GM12878 (cell line): ENCODE measurements at regions of chr6 and their contacts with region 1.

Region 1: GRCh38 chr6:139364302-139364981 is 10.0 kb downstream of the CITED2 start:
- DNase-seq: peak; percentile 48
- ATAC-seq: peak; percentile 79
- H3K4me3 ChIP-seq: no peak overlapping the region
- H3K27ac ChIP-seq: no peak overlapping the region
- H3K4me1 ChIP-seq: no peaks in the 10 kb centered on the region
- H3K27me3 ChIP-seq: no peaks in the 10 kb centered on the region
- CTCF ChIP-seq: peak; percentile 42 to 71 (median 48); a peak in 5 of 6 replicates
- EP300 ChIP-seq: no peak
- POLR2A ChIP-seq: no peak
- RAD21 ChIP-seq: peak; percentile 92

Region 2: GRCh38 chr6:137811121-137811915 is 1553.1 kb before region 1 on chr6:
- CTCF ChIA-PET with region 1: no interaction called
- POLR2A ChIA-PET with region 1: no interaction called
- RAD21 ChIA-PET with region 1: no interaction called
- SMC1A ChIA-PET with region 1: no interaction called
- in situ Hi-C with region 1: no loop called
- intact Hi-C with region 1: no loop called
- DNase-seq: peak; percentile 95
- ATAC-seq: peak; percentile 95
- H3K4me3 ChIP-seq: peak overlapping the region; percentile 20
- H3K27ac ChIP-seq: peak overlapping the region; percentile 89
- H3K4me1 ChIP-seq: peaks cover 31% of the 10 kb centered on the region
- H3K27me3 ChIP-seq: no peaks in the 10 kb centered on the region
- CTCF ChIP-seq: no peak
- EP300 ChIP-seq: peak in 1 of 2 experiments; percentile 72; a peak in 2 of 4 replicates
- POLR2A ChIP-seq: peak; percentile 88
- RAD21 ChIP-seq: no peak

Region 3: GRCh38 chr6:138297761-138298298 is 1066.6 kb before region 1 on chr6:
- CTCF ChIA-PET with region 1: no interaction called
- POLR2A ChIA-PET with region 1: no interaction called
- RAD21 ChIA-PET with region 1: no interaction called
- SMC1A ChIA-PET with region 1: no interaction called
- in situ Hi-C with region 1: no loop called
- intact Hi-C with region 1: no loop called
- DNase-seq: no peak
- ATAC-seq: no peak
- H3K4me3 ChIP-seq: no peak overlapping the region
- H3K27ac ChIP-seq: no peak overlapping the region
- H3K4me1 ChIP-seq: no peaks in the 10 kb centered on the region
- H3K27me3 ChIP-seq: no peaks in the 10 kb centered on the region
- CTCF ChIP-seq: no peak
- EP300 ChIP-seq: no peak
- POLR2A ChIP-seq: no peak
- RAD21 ChIP-seq: no peak

Region 4: DNA sequence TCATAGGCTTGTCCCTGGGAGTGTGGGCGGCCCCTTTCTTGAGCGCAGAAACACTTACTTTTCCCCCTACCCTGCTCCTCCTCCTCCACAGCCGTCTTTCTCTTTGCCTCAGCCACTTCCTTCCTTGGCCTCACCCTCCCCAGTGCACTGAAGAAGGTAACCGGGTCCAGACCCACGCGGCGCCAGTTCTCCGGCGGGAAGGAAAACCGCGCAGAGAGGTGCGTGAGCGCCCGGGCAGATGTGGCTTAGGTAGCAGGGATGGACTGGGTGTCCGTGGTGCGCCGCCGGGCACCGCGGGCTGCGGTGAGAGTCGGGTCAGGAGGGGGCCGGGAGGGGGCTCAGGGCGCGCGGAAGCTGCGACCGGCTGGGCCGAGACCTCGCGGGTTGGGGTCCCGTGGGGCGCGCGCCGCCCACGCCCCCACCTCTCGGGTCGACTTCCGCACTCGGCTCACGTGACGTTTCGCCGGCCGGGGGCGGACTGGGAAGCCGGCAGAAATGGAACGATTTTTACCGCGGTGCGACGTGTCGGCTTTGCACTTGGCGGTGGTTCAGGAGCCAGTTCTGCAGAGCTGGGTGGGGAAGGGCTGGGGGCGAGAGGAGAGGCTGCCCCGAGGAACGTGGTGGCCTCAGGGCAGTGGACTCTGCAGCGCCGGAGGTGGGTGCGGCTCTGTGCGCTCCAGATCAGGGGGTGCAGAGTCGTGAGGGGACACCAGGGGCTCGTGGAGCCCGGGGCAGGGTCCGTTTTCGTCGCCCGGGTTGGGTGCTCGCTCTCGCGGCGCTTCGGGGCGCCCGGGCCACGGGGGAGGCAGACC is 335.6 kb before region 1 on chr6 and contains the start of gene ABRACL:
- CTCF ChIA-PET with region 1: interaction called, 3 read pairs
- POLR2A ChIA-PET with region 1: no interaction called
- RAD21 ChIA-PET with region 1: no interaction called
- SMC1A ChIA-PET with region 1: no interaction called
- in situ Hi-C with region 1: no loop called
- intact Hi-C with region 1: loop called (anchors 10 kb)
- DNase-seq: peak; percentile 45
- ATAC-seq: peak; percentile 80
- H3K4me3 ChIP-seq: peak within 1 kb of the TSS; percentile 93
- H3K27ac ChIP-seq: peak within 1 kb of the TSS; percentile 88
- H3K4me1 ChIP-seq: peaks cover 6% of the 10 kb centered on the region
- H3K27me3 ChIP-seq: no peaks in the 10 kb centered on the region
- CTCF ChIP-seq: no peak
- EP300 ChIP-seq: no peak
- POLR2A ChIP-seq: peak; percentile 93
- RAD21 ChIP-seq: 0 out of 2 replicates have a peak, but pooled peaks have one; percentile 8
- polyA plus RNA-seq, gene ABRACL: 636 to 647 TPM

Region 5: DNA sequence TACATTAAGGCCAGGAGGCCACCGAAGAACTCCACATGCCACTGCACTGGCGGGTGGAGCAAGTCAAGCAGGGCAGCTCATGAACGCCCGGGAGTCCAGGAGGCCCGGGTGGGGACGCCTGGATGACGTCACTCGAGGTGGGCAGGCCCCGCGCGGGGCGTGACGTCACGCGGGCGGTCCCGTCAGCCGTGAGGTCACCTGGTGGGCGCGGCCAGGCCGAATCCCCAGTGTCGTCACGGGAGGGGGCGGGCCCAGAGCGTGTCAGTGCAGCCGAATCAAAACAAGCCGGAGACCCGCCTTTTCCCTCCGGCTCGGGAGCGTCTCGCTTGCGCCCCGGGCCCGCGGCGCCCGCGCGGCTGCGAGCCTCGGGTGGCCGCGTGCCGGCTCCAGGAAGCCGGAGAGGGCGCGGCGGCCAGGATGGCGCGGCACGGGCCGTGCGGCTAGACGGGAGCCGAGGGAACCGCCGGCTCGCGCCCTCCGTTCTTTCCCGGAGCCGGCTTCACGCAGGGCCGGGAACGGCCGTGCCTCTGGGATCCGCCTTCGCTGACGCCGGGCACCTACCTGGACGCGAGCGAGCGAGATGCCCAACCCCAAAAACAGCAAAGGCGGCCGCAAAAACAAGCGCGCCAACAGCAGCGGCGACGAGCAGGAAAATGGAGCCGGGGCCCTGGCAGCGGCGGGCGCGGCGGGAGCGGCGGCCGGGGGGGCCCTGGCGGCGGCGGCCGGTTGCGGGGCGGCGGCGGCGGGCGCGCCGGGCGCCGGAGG is 229.4 kb before region 1 on chr6 and contains the start of gene HECA:
- CTCF ChIA-PET with region 1: interaction called, 6 read pairs
- POLR2A ChIA-PET with region 1: no interaction called
- RAD21 ChIA-PET with region 1: interaction called, 11 read pairs
- SMC1A ChIA-PET with region 1: interaction called, 10 read pairs
- in situ Hi-C with region 1: no loop called
- intact Hi-C with region 1: no loop called
- DNase-seq: no peak
- ATAC-seq: peak; percentile 76
- H3K4me3 ChIP-seq: peak within 1 kb of the TSS; percentile 87
- H3K27ac ChIP-seq: peak within 1 kb of the TSS; percentile 35
- H3K4me1 ChIP-seq: peaks cover 6% of the 10 kb centered on the region
- H3K27me3 ChIP-seq: no peaks in the 10 kb centered on the region
- CTCF ChIP-seq: no peak
- EP300 ChIP-seq: no peak
- POLR2A ChIP-seq: peak; percentile 70
- RAD21 ChIP-seq: no peak
- polyA plus RNA-seq, gene HECA: 0.64 to 0.82 TPM

Region 6: DNA sequence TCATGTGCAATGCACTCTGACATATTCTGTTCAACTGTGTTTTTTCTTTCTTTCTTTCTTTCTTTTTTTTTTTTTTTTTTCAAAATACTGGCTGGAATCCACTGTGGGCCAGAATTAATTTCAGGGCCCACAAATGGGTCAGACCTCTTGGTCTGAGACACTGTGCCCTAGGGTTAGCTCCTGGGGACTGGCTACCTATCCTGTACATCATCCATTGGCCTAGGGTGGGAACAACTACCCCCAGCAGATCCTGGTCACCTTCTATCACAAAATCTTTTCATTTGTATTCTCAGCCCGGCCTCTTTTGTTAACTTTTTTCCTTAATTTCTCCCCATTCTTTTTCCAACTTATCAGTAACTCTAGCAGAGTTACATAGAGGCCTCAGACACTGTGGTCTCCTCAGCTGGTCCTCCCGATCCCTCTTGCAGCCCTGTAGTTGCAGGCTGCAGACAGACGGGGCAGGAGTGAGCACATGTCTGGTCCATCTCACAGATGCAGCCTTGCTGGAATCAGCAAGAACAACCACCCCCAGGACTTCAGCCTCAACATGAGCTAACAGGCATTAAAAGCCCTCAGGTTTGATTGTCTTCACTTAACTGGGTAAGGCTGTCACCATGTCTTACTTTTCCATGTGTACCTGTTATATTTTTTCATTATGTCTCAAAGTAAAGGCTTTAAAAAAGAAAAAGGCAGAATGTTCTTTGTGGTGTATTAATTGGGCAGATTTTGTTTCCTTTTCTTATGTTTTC is 114.0 kb before region 1 on chr6:
- CTCF ChIA-PET with region 1: interaction called, 22 read pairs
- POLR2A ChIA-PET with region 1: no interaction called
- RAD21 ChIA-PET with region 1: interaction called, 15 read pairs
- SMC1A ChIA-PET with region 1: interaction called, 10 read pairs
- in situ Hi-C with region 1: no loop called
- intact Hi-C with region 1: no loop called
- DNase-seq: no peak
- ATAC-seq: peak; percentile 99
- H3K4me3 ChIP-seq: no peak overlapping the region
- H3K27ac ChIP-seq: no peak overlapping the region; the same call in 1 of the 2 replicates
- H3K4me1 ChIP-seq: peaks cover 13% of the 10 kb centered on the region
- H3K27me3 ChIP-seq: no peaks in the 10 kb centered on the region
- CTCF ChIP-seq: peak; percentile 63 to 89 (median 79)
- EP300 ChIP-seq: no peak
- POLR2A ChIP-seq: no peak
- RAD21 ChIP-seq: peak; percentile 59

Region 7: GRCh38 chr6:139291813-139292619 is 72.4 kb before region 1 on chr6 and contains the start of gene TXLNB:
- CTCF ChIA-PET with region 1: interaction called, 19 read pairs
- POLR2A ChIA-PET with region 1: no interaction called
- RAD21 ChIA-PET with region 1: interaction called, 29 read pairs
- SMC1A ChIA-PET with region 1: interaction called, 27 read pairs
- in situ Hi-C with region 1: no loop called
- intact Hi-C with region 1: loop called (anchors 1 kb)
- DNase-seq: peak; percentile 83
- ATAC-seq: peak; percentile 88
- H3K4me3 ChIP-seq: peak within 1 kb of the TSS; percentile 40
- H3K27ac ChIP-seq: peak within 1 kb of the TSS; percentile 88
- H3K4me1 ChIP-seq: peaks cover 35% of the 10 kb centered on the region
- H3K27me3 ChIP-seq: no peaks in the 10 kb centered on the region
- CTCF ChIP-seq: no peak
- EP300 ChIP-seq: peak; percentile 46 to 81; a peak in 2 of 4 replicates
- POLR2A ChIP-seq: 0 out of 2 replicates have a peak, but pooled peaks have one; percentile 51
- RAD21 ChIP-seq: no peak; the same call in 1 of the 2 replicates
- polyA plus RNA-seq, gene TXLNB: 0.07 to 0.10 TPM

Region 8: GRCh38 chr6:139343052-139343750 is 21.2 kb before region 1 on chr6:
- CTCF ChIA-PET with region 1: interaction called, 8 read pairs
- POLR2A ChIA-PET with region 1: no interaction called
- RAD21 ChIA-PET with region 1: interaction called, 4 read pairs
- SMC1A ChIA-PET with region 1: interaction called, 11 read pairs
- in situ Hi-C with region 1: no loop called
- intact Hi-C with region 1: no loop called
- DNase-seq: no peak
- ATAC-seq: peak; percentile 27; the same call in 2 of the 3 replicates
- H3K4me3 ChIP-seq: no peak overlapping the region
- H3K27ac ChIP-seq: 0 out of 2 replicates have a peak overlapping the region, but pooled peaks have one; percentile 0
- H3K4me1 ChIP-seq: peaks cover 6% of the 10 kb centered on the region
- H3K27me3 ChIP-seq: no peaks in the 10 kb centered on the region
- CTCF ChIP-seq: no peak
- EP300 ChIP-seq: no peak
- POLR2A ChIP-seq: no peak
- RAD21 ChIP-seq: no peak